Left lung (tissue), 14 donors: ENCODE measurements at regions of chr12 and their contacts with region 1.

Region 1: DNA sequence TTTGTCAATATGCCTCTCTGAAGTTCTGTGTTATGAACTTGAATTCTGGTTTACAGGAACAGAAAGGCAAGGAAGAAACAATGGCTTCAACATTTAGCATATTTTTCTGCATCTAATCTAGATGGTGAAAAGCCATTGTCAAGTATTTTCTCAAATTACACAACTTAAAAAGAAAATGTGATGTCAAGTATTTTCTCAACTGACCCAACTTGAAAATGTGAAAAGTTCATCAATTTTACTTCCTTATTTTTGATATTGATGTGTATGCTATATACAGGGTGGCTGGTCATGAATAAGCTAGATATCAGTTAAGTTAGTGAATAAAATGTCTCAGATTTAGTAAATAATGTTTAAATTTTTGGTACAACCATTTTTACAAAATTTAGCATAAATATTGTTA is 196.7 kb downstream of the ALX1 start:
- DNase-seq: no peak
- ATAC-seq: no peak
- H3K4me3 ChIP-seq: no peak overlapping the region
- H3K27ac ChIP-seq: no peak overlapping the region
- H3K4me1 ChIP-seq: no peaks in the 10 kb centered on the region
- H3K27me3 ChIP-seq: no peaks in the 10 kb centered on the region
- CTCF ChIP-seq: no peak

Region 2: GRCh38 chr12:85325442-85325841 is 151.3 kb before region 1 on chr12:
- intact Hi-C with region 1: no loop called
- DNase-seq: no peak
- ATAC-seq: no peak
- H3K4me3 ChIP-seq: no peak overlapping the region
- H3K27ac ChIP-seq: no peak overlapping the region
- H3K4me1 ChIP-seq: no peaks in the 10 kb centered on the region
- H3K27me3 ChIP-seq: no peaks in the 10 kb centered on the region
- CTCF ChIP-seq: no peak

Region 3: GRCh38 chr12:85872497-85873091 is 395.8 kb after region 1 on chr12:
- intact Hi-C with region 1: loop called in 1 of 2 experiments (anchors 5 kb)
- DNase-seq: peak in 2 of 4 donors; percentile 23 to 60
- ATAC-seq: peak; percentile 82
- H3K4me3 ChIP-seq: no peak overlapping the region
- H3K27ac ChIP-seq: no peak overlapping the region
- H3K4me1 ChIP-seq: no peaks in the 10 kb centered on the region
- H3K27me3 ChIP-seq: no peaks in the 10 kb centered on the region
- CTCF ChIP-seq: peak; percentile 51 to 53